Activated B cell treated with CpG ODN at 0.5 μM for 24 hours (primary cell): ENCODE measurements at regions of chr5 and their contacts with region 1.

Region 1: DNA sequence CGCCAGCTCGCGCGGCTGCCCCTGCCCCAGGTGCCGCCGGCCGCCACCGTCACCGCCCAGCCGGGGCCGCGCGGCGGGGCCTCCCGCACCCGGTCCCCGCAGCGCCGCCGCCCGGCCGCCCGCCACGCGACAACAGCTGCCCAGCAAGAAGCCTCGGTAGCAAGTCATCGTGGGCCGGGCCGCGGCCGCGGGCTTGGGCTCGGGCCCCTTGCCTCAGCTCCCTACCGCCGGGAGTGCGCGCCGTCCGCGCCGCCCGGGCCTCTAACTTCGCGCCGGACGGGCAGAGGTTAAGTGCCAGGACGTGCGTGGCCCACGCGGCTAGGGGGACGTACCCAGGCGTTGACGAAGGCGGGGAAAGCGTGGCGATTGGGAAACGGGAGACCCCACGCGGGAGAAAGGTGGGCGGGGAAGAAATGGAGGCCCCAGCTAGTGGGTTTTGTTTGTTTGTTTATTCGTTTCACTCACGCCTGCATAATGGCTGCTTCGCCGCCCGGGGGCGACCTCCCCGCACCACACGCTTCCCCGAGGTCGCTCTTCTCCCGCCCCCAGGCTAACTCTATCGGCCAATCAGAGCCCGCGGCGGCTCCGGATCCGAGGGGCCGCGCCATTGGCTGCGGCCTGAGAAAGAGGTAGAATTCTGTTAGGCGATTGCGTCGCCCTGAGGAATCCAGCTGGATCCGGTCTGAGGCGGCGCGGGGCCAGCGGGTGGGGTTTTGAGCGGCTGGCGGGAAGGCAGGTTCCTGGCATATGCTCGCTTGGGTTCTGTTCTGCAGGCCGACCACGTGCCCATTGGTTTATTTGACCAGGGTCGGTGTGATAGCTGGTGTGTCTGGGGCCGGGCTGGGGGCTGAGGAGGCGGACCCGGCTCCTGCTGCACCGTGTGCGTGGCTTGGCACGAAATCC is at the start of gene NADK2:
- DNase-seq: peak; percentile 87
- ATAC-seq: peak; percentile 87
- H3K4me3 Mint-ChIP-seq: peak within 1 kb of the TSS; percentile 91
- H3K27ac Mint-ChIP-seq: peak within 1 kb of the TSS; percentile 95
- H3K4me1 Mint-ChIP-seq: peaks cover 49% of the 10 kb centered on the region
- H3K27me3 Mint-ChIP-seq: no peaks in the 10 kb centered on the region
- CTCF ChIP-seq: no peak
- total RNA-seq, gene NADK2: 13.3 and 18.2 TPM in 2 replicates

Region 2: DNA sequence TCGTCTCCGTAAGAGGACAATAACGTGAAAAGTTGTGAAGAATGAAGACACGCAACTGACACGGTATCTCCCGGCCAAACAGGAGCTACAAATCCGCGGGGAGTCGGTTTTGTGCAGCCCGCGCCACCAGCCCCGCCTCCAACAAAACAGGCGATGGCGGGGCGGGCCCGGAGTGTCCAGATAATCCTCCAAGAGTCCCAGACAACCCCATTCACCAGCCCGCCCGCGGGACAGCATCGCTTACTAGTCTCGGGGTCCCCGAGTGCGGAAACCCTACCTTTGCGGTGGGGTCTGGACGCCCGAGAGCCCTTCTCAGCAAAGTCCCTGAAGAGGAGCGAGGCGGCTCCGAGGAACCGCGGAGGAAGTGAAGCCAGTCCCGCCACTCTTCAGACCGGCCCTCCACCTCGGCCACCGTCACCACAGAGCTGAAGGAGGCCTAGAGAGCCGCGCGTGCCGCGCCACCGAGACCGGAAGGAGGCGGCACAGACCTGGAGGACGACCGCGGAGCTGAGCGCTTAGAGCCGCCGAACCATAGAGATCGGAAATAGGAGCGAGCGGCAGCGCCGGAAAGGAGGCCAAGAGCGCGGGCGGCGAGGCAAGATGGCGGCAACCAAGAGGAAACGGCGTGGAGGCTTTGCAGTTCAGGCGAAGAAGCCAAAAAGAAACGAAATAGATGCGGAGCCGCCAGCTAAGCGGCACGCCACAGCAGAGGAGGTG is 1326.6 kb before region 1 on chr5 and contains the starts of genes BRIX1 and RAD1:
- CTCF ChIA-PET with region 1: interaction called, 3 read pairs
- POLR2A ChIA-PET with region 1: interaction called, 4 read pairs
- intact Hi-C with region 1: loop called (anchors 1 kb)
- DNase-seq: peak; percentile 92
- ATAC-seq: peak; percentile 98
- H3K4me3 Mint-ChIP-seq: peak within 1 kb of the TSS; percentile 57
- H3K27ac Mint-ChIP-seq: no peak within 1 kb of the TSS
- H3K4me1 Mint-ChIP-seq: peaks cover 34% of the 10 kb centered on the region
- H3K27me3 Mint-ChIP-seq: no peaks in the 10 kb centered on the region
- CTCF ChIP-seq: no peak
- total RNA-seq, gene BRIX1: 40.6 and 42.4 TPM in 2 replicates
- total RNA-seq, gene RAD1: 20.2 and 24.4 TPM in 2 replicates

Region 3: GRCh38 chr5:36151434-36152323 is 90.2 kb before region 1 on chr5 and contains the starts of genes LMBRD2 and SKP2:
- CTCF ChIA-PET with region 1: interaction called, 11 read pairs
- POLR2A ChIA-PET with region 1: interaction called, 35 read pairs
- intact Hi-C with region 1: loop called (anchors 1 kb)
- DNase-seq: peak; percentile 95
- ATAC-seq: peak; percentile 97
- H3K4me3 Mint-ChIP-seq: peak within 1 kb of the TSS; percentile 96
- H3K27ac Mint-ChIP-seq: peak within 1 kb of the TSS; percentile 85
- H3K4me1 Mint-ChIP-seq: peaks cover 40% of the 10 kb centered on the region
- H3K27me3 Mint-ChIP-seq: no peaks in the 10 kb centered on the region
- CTCF ChIP-seq: no peak
- total RNA-seq, gene LMBRD2: 6.4 and 8.9 TPM in 2 replicates
- total RNA-seq, gene SKP2: 18.5 TPM in 2 replicates

Region 4: GRCh38 chr5:36507332-36507952 is 265.6 kb after region 1 on chr5:
- CTCF ChIA-PET with region 1: interaction called, 10 read pairs
- POLR2A ChIA-PET with region 1: interaction called, 4 read pairs
- intact Hi-C with region 1: loop called (anchors 1 kb)
- DNase-seq: peak; percentile 56
- ATAC-seq: peak; percentile 28
- H3K4me3 Mint-ChIP-seq: no peak overlapping the region
- H3K27ac Mint-ChIP-seq: no peak overlapping the region
- H3K4me1 Mint-ChIP-seq: no peaks in the 10 kb centered on the region
- H3K27me3 Mint-ChIP-seq: peaks cover 13% of the 10 kb centered on the region
- CTCF ChIP-seq: peak; percentile 48

Region 5: GRCh38 chr5:37005946-37006540 is 764.2 kb after region 1 on chr5:
- CTCF ChIA-PET with region 1: no interaction called
- POLR2A ChIA-PET with region 1: no interaction called
- intact Hi-C with region 1: loop called (anchors 5 kb)
- DNase-seq: no peak
- ATAC-seq: no peak
- H3K4me3 Mint-ChIP-seq: no peak overlapping the region
- H3K27ac Mint-ChIP-seq: no peak overlapping the region
- H3K4me1 Mint-ChIP-seq: no peaks in the 10 kb centered on the region
- H3K27me3 Mint-ChIP-seq: no peaks in the 10 kb centered on the region
- CTCF ChIP-seq: no peak

Region 6: DNA sequence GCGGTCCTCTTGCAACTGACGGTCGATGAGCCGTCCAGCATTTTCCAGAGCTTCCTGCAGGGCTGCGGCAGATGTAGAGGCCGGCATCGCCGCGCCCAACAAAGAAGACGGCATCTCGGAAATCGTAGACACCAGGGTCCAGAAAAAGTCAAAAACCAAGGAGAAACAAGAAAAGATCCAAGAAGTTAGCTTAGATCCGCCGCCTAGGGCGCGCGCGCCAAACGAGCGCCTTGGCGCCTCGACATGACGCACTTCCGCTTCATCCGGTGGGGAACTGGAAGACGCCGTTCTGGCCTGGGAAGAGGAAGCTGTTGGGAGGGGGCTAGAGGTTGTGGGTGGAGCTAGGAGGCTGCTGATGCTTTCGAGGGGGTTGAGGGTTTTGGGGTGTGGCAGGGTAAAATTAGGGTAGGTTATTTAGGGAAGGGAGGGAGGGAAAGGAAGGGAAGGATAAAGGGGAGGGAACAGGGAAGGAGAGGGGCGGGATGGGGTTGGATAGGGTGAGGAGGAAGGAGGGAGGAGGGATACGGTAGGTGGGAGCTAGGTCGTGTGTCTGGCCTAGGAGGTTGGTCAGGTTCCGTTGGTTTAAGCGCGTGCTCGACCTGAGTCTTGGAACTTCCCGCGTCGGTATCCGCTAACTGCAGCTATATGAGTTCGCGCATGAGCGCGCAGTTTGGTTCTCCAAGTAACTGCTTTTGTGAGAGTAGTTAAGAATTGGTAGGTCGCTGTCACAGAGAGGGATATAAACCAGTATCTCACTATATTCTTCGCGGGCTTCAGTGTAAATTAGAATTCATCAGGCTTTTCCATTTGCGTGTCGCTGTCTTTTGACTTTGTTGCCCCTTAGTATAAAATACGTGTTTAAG is 1129.2 kb after region 1 on chr5 and contains the start of gene NUP155:
- CTCF ChIA-PET with region 1: no interaction called
- POLR2A ChIA-PET with region 1: interaction called, 6 read pairs
- intact Hi-C with region 1: loop called (anchors 5 kb)
- DNase-seq: peak; percentile 79
- ATAC-seq: peak; percentile 94
- H3K4me3 Mint-ChIP-seq: peak within 1 kb of the TSS; percentile 99
- H3K27ac Mint-ChIP-seq: peak within 1 kb of the TSS; percentile 97
- H3K4me1 Mint-ChIP-seq: peaks cover 32% of the 10 kb centered on the region
- H3K27me3 Mint-ChIP-seq: no peaks in the 10 kb centered on the region
- CTCF ChIP-seq: no peak
- total RNA-seq, gene NUP155: 37.2 and 38.7 TPM in 2 replicates